ENCODE measurements at regions of chr12 and their contacts with region 1.

Region 1: DNA sequence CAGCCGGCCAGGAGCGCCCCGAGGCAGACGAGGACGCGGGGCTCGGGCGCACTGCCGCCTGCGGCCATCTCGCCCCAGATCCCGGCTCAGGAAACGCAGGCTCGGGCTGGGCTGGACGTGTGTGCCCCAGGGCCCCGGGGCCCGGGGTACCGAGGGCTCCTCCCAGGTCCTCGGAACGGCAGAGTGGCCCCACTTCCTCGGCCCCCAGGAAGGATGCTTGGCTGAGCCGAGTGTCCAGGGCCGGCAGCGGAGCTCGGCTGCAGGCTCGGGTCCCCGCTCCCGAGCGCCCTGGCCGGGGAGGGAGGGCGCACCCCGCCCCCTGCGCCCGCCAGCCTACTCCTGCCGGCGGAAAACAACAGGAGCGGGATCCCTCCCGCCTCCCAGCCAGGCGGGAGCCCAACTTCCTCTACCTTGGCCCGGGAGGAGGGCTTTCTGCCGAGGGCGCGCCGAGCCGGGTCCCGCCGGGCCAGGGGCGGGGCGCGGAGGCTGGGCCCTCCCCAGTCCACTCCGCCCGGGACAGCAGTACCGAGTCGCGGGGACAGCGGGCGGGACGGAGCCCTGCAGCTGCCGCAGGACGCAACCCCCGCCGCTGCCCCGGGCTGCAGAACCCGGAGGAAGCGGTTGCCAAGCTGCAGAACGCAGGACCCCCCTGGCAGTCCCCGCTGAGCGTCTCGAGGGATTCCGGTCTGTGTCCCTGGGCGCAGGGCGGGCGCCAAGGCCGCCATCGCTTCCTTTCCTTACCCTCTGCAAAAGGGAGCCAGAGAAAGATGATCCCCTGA is at the start of gene VSIG10:
- DNase-seq: peak; percentile 68
- ATAC-seq: peak; percentile 96 to 98
- total RNA-seq, gene VSIG10: 9.3 to 17.2 TPM

Region 2: DNA sequence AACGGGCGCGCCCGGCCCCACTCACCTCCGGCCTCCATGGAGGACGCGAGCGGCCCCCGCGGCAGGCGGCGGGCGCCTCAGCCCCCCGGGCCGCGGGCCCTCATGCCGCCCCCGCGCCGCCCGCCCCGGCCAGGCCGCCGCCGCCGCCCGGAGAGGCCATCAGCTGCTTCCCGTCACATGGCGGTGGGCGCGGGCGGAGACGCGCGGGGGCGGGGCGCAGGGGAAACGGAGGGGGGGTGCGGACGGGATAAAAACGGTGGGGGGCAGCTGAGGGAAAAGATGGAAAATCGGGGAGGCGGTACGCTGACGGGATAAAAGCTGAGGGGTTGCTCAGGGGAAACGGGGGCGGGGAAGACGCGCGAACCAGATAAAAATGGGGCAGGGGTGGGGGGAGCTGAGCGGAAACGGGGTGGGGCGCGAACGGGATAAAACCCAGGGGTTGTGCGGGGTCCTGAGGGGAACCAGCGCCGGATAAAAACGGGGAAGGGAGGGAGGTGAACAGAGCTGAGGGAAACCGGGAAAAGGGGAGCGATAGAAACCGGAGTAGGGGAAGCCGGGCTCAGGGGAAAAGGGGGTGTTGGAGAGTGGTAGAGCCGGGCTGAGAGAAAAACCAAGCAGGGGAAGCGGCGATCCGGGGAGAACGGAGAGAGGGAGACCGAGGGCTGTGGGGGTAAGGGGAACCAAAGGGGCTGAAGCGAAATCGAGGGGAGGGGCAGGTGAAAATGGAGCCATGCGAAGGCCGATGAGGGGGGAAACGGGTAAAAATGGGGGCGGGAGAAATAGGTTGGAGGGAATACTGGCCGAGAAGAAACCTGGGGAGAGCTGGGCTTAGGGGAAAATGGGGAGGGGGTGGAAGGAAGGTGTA is 42.5 kb before region 1 on chr12 and contains the start of gene WSB2:
- intact Hi-C with region 1: loop called in 1 of 2 experiments (anchors 5 kb)
- DNase-seq: peak; percentile 88
- ATAC-seq: peak; percentile 66 to 73
- total RNA-seq, gene WSB2: 77.6 to 83.4 TPM

Region 3: DNA sequence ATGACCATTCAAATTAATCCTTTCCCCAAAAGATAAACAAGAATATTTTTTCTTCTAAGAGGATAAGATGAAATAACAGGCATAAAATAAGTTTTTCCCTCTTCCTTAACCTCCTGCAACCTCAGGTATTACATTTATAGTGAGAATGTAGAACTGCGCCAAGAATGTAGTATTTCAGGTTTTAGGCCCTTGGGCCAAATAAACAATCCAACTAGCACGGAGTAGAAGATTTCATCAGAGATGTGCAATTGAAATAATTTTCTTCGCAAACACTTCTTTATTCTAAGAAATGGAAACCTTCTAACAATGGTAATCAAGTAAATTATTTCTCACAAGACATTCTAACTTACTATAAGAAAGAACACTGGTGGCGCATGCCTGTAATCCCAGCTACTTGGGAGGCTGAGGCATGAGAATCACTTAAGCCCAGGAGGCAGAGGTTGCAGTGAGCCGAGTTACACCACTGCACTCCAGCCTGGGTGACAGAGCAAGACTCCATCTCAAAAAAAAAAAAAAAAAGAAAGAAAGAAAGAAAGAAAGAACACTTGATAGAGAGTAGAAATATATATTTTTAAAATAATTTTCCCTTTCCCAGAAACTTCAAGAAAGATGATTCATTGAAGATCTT is 168.1 kb after region 1 on chr12:
- intact Hi-C with region 1: no loop called
- DNase-seq: no peak
- ATAC-seq: no peak

Region 4: GRCh38 chr12:118650586-118650960 is 546.8 kb after region 1 on chr12:
- intact Hi-C with region 1: no loop called
- DNase-seq: no peak
- ATAC-seq: no peak